ENCODE measurements at regions of chrX and their contacts with region 1.

Region 1: DNA sequence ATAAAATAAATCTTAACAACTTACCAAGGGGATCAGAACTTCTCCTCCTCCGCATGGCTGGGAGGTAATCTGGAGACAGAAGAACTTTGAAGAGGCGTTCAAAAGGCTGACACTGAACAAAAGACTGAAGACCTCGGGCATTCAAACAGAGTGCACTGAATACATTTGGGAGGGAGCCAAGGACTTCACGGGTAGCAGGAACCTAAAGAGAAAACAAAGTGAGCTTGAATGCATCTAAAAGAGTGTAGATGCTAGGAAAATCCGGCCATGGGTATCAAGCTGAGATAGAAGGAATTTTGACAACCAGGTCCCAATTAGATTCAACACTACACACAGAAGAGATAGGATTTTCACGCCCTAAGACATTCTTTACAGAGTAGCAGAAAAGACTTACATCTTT is 69.6 kb downstream of the HUWE1 start:
- DNase-seq: no peak
- ATAC-seq: no peak
- H3K4me3 Mint-ChIP-seq: no peak overlapping the region
- H3K27ac Mint-ChIP-seq: no peak overlapping the region
- H3K4me1 Mint-ChIP-seq: no peaks in the 10 kb centered on the region
- H3K27me3 Mint-ChIP-seq: no peaks in the 10 kb centered on the region
- CTCF ChIP-seq: no peak

Region 2: DNA sequence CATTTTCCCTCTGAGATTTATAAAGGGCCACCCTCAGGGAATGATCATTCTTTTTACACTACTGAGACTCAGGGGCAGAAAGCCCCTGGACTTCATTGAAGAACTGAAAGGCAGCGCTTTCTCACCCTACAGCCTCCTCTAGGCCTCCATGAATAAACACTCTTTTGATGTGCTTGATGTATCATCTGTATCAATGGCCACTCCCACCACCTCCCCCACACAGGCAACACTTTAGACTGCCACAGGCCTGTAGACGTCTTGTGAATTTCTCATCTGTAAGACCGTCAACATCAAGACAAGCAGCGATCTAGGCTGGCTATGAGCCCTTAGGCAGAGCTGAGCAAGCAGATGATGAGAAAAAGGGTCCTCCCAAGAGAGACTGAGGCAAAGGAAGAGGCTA is 53.6 kb before region 1 on chrX:
- CTCF ChIA-PET with region 1: no interaction called
- POLR2A ChIA-PET with region 1: no interaction called
- intact Hi-C with region 1: no loop called
- DNase-seq: no peak
- ATAC-seq: no peak
- H3K4me3 Mint-ChIP-seq: no peak overlapping the region
- H3K27ac Mint-ChIP-seq: no peak overlapping the region
- H3K4me1 Mint-ChIP-seq: no peaks in the 10 kb centered on the region
- H3K27me3 Mint-ChIP-seq: no peaks in the 10 kb centered on the region
- CTCF ChIP-seq: no peak

Region 3: DNA sequence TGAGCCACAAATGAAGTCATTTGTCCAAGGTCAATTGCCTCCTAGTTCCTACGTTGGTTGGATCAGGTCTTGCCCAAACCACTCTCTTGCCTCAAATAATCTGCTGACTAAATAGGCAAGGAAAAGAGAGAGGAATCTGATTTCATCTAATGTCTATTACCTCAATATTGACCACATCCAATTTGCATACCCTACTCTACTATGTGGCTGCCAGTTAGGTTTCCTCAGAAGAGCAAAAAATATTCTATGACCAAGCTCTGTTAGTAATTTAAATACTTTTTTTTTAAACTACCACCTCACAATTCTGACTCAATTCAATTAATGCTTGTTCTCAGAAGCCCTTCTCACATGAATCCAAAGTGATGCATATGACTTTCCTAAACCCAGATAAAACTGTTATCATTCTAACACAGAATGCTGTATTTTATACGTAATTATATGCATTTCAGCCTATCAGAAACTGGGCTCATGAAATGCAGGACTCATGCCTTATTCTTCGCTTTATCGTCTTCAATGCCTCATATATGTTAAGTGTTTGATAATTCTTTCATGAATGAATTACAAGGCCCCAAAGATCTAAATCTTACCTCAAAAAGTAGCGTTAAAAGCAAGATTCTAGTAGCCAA is 29.0 kb before region 1 on chrX:
- CTCF ChIA-PET with region 1: no interaction called
- POLR2A ChIA-PET with region 1: no interaction called
- intact Hi-C with region 1: loop called (anchors 5 kb)
- DNase-seq: no peak
- ATAC-seq: no peak
- H3K4me3 Mint-ChIP-seq: no peak overlapping the region
- H3K27ac Mint-ChIP-seq: no peak overlapping the region
- H3K4me1 Mint-ChIP-seq: no peaks in the 10 kb centered on the region
- H3K27me3 Mint-ChIP-seq: no peaks in the 10 kb centered on the region
- CTCF ChIP-seq: no peak

Region 4: GRCh38 chrX:53669258-53669657 is 52.3 kb after region 1 on chrX:
- CTCF ChIA-PET with region 1: no interaction called
- POLR2A ChIA-PET with region 1: no interaction called
- intact Hi-C with region 1: loop called (anchors 10 kb)
- DNase-seq: no peak
- ATAC-seq: no peak
- H3K4me3 Mint-ChIP-seq: no peak overlapping the region
- H3K27ac Mint-ChIP-seq: no peak overlapping the region
- H3K4me1 Mint-ChIP-seq: peaks cover 7% of the 10 kb centered on the region
- H3K27me3 Mint-ChIP-seq: no peaks in the 10 kb centered on the region
- CTCF ChIP-seq: no peak

Region 5: DNA sequence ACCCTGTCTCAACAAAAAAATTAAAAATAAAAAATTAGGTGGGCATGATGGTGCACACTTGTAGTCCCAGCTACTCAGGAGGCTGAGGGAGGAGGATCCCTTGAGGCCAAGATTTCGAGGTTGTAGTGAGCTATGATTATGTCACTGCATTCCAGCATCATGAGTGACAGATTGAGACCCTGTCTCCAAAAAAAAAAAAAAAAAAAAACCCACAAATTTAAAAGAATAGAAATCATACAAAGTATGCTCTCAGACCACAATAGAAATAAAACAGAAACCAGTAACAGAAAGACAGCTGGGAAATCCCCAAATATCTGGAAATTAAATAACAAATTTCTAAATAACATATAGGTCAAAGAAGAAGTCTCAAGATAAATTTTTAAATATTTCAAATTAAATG is 150.6 kb after region 1 on chrX:
- CTCF ChIA-PET with region 1: no interaction called
- POLR2A ChIA-PET with region 1: no interaction called
- intact Hi-C with region 1: no loop called
- DNase-seq: no peak
- ATAC-seq: no peak
- H3K4me3 Mint-ChIP-seq: no peak overlapping the region
- H3K27ac Mint-ChIP-seq: no peak overlapping the region
- H3K4me1 Mint-ChIP-seq: no peaks in the 10 kb centered on the region
- H3K27me3 Mint-ChIP-seq: no peaks in the 10 kb centered on the region
- CTCF ChIP-seq: no peak

Measured in activated B cell treated with CpG ODN at 0.5 μM for 24 hours (primary cell).